ENCODE measurements at regions of chr6 and their contacts with region 1.

Region 1: GRCh38 chr6:150395398-150396009 is 26.7 kb downstream of the IYD start:
- DNase-seq: peak in 2 of 3 donors; percentile 64 to 66
- ATAC-seq: peak; percentile 79 to 80
- H3K4me3 ChIP-seq: no peak overlapping the region
- H3K27ac ChIP-seq: no peak overlapping the region
- H3K4me1 ChIP-seq: no peaks in the 10 kb centered on the region
- H3K27me3 ChIP-seq: no peaks in the 10 kb centered on the region

Region 2: DNA sequence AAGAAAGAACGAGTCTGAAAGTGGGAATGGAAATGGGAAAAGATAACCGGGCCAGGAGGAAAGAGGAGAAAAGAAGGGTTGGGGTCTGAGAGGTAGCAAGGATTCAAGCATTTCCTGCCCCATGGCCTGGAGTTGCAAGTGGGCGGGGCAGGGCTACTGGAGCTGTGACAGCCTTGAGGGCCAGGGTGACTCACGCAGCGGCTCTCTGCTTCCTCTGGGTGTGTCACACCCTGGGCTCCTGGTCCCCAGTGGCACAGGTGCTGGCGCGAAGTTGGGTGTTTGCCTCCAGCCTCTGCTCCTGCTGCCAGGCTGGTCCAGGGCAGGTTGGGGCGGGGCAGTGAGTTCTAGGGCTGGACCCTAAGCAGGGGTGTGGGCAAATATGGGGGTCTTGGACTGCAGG is 323.3 kb before region 1 on chr6:
- intact Hi-C with region 1: loop called in 2 of 4 experiments (anchors 5 to 10 kb)
- DNase-seq: peak; percentile 66 to 77 (median 73)
- ATAC-seq: peak in 1 of 2 donors; percentile 24
- H3K4me3 ChIP-seq: no peak overlapping the region
- H3K27ac ChIP-seq: no peak overlapping the region
- H3K4me1 ChIP-seq: no peaks in the 10 kb centered on the region
- H3K27me3 ChIP-seq: no peaks in the 10 kb centered on the region

Region 3: DNA sequence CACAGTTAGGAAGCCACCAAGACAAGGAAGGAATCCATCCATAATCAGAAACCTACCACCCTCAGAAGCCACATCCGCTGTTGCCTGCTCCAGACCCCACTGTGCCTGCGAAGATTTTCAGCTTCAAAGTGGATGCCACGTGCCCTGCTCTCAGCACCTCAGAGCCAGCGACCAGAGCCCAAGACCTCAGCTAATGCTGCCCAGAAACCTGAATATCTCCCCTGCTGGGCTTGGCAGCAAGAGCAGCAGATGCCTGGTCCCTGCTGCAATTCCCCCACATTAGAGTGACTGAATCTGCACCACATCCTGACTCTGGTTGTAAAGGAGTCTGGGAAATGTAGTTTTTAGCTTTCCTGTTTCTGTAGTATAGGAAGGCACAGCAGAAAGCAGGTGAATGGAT is 315.9 kb before region 1 on chr6:
- intact Hi-C with region 1: loop called (anchors 5 to 10 kb)
- DNase-seq: no peak
- ATAC-seq: no peak
- H3K4me3 ChIP-seq: no peak overlapping the region
- H3K27ac ChIP-seq: no peak overlapping the region
- H3K4me1 ChIP-seq: no peaks in the 10 kb centered on the region
- H3K27me3 ChIP-seq: no peaks in the 10 kb centered on the region

Region 4: GRCh38 chr6:150256618-150257272 is 138.8 kb before region 1 on chr6:
- intact Hi-C with region 1: no loop called
- DNase-seq: no peak
- ATAC-seq: no peak
- H3K4me3 ChIP-seq: no peak overlapping the region
- H3K27ac ChIP-seq: no peak overlapping the region
- H3K4me1 ChIP-seq: peaks cover 2% of the 10 kb centered on the region
- H3K27me3 ChIP-seq: no peaks in the 10 kb centered on the region

Region 5: DNA sequence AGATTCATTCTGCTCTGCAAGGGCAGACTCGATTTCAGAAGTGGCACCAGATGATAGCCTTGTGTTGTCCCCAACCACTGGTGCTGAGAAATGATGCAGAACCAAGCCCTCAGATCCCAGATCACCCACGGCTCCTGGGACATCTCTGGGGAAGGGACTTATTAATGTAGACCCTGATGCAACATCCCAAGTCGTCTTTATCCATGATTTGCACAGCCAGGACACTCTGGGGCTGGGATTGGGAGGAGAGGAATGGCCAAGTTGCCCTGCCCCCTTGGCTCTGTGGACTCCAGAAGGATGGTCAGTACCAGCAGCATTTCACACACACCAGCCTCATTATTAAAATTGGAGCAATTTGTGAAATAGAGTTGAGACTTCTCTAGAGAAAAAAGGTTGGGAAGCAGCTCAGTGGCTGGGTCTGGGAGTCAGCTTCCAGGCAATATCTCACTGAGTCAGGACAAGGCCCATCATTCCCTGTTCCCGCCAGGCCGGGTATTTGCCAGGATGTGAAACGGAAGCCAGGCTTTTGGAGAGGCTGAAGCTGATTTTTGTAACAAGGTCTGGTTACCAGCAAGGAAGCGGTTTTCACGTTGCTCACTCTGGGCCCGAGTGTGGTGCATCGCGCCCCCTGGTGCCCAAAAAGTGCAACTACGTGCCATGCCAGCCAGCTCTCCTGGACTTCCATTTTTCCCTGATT is 928.4 kb after region 1 on chr6:
- intact Hi-C with region 1: no loop called
- DNase-seq: peak; percentile 84 to 93 (median 93)
- ATAC-seq: peak; percentile 90 to 94
- H3K4me3 ChIP-seq: no peak overlapping the region
- H3K27ac ChIP-seq: peak overlapping the region; percentile 54
- H3K4me1 ChIP-seq: peaks cover 5% of the 10 kb centered on the region
- H3K27me3 ChIP-seq: no peaks in the 10 kb centered on the region

Measured in right cardiac atrium (tissue), 5 donors.